ENCODE measurements at regions of chr5 and their contacts with region 1.

Region 1: GRCh38 chr5:97078958-97079743 is 63.3 kb downstream of the LIX1 start:
- DNase-seq: no peak
- H3K4me3 ChIP-seq: no peak overlapping the region
- H3K4me3 Mint-ChIP-seq: no peak overlapping the region
- H3K27ac Mint-ChIP-seq: no peak overlapping the region
- H3K4me1 ChIP-seq: peaks cover 29% of the 10 kb centered on the region
- H3K4me1 Mint-ChIP-seq: peaks cover 25% of the 10 kb centered on the region
- H3K27me3 ChIP-seq: no peaks in the 10 kb centered on the region
- H3K27me3 Mint-ChIP-seq: no peaks in the 10 kb centered on the region
- CTCF ChIP-seq: no peak

Region 2: DNA sequence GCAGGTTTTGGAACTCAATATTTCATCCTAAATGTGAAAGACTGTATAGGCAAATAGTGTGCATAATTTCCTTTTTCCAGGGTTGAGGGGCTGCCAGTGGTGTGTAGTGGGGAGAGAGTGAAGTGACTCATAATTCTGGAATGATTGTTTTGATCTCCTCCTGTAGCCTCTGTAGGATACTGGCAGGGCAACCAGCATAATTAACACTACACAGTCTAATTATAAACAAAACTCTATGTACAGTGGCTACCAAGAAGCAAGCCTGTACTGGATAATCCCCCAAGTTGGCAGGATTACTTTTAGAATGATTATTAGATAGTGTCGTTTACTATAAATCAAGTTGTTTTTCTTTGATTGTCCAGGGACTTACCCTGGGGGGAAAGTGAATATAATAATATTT is 111.1 kb before region 1 on chr5:
- CTCF ChIA-PET with region 1: no interaction called
- POLR2A ChIA-PET with region 1: no interaction called
- intact Hi-C with region 1: no loop called
- DNase-seq: no peak
- H3K4me3 ChIP-seq: no peak overlapping the region
- H3K4me3 Mint-ChIP-seq: no peak overlapping the region
- H3K27ac Mint-ChIP-seq: no peak overlapping the region
- H3K4me1 ChIP-seq: peaks cover 9% of the 10 kb centered on the region; the same call in 1 of the 2 replicates
- H3K4me1 Mint-ChIP-seq: peaks cover 12% of the 10 kb centered on the region
- H3K27me3 ChIP-seq: no peaks in the 10 kb centered on the region
- H3K27me3 Mint-ChIP-seq: no peaks in the 10 kb centered on the region
- CTCF ChIP-seq: no peak

Region 3: GRCh38 chr5:97026721-97027120 is 52.4 kb before region 1 on chr5:
- CTCF ChIA-PET with region 1: no interaction called
- POLR2A ChIA-PET with region 1: no interaction called
- intact Hi-C with region 1: no loop called
- DNase-seq: no peak
- H3K4me3 ChIP-seq: no peak overlapping the region
- H3K4me3 Mint-ChIP-seq: no peak overlapping the region
- H3K27ac Mint-ChIP-seq: no peak overlapping the region
- H3K4me1 ChIP-seq: 0 out of 2 replicates have a peak, but pooled peaks cover 5% of the 10 kb centered on the region
- H3K4me1 Mint-ChIP-seq: no peaks in the 10 kb centered on the region
- H3K27me3 ChIP-seq: no peaks in the 10 kb centered on the region
- H3K27me3 Mint-ChIP-seq: no peaks in the 10 kb centered on the region
- CTCF ChIP-seq: no peak

Region 4: GRCh38 chr5:97094579-97095317 is 15.6 kb after region 1 on chr5:
- CTCF ChIA-PET with region 1: no interaction called
- POLR2A ChIA-PET with region 1: no interaction called
- intact Hi-C with region 1: loop called (anchors 2 kb)
- DNase-seq: no peak
- H3K4me3 ChIP-seq: no peak overlapping the region
- H3K4me3 Mint-ChIP-seq: no peak overlapping the region
- H3K27ac Mint-ChIP-seq: no peak overlapping the region
- H3K4me1 ChIP-seq: peaks cover 15% of the 10 kb centered on the region
- H3K4me1 Mint-ChIP-seq: peaks cover 11% of the 10 kb centered on the region
- H3K27me3 ChIP-seq: no peaks in the 10 kb centered on the region
- H3K27me3 Mint-ChIP-seq: no peaks in the 10 kb centered on the region
- CTCF ChIP-seq: no peak

Region 5: DNA sequence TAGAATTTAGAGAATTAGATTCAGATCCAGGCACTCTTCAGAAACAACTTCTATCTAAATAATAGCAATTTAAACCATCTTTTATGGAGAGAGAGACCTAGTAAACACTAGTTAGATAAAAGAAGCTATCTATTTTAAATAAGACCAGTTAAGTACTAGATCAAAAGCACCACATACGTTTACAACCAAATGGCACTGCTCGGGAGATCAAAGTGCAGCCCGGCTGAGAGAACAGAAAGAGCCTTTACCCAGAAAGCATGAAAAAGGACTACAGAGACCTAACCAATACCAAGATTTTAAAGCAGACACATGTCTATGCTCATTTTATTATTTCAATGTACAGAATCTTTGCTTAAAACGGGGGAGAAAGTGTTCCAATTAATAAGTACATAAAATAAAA is 32.5 kb after region 1 on chr5:
- CTCF ChIA-PET with region 1: no interaction called
- POLR2A ChIA-PET with region 1: no interaction called
- intact Hi-C with region 1: loop called (anchors 5 kb)
- DNase-seq: peak; percentile 59 to 69
- H3K4me3 ChIP-seq: no peak overlapping the region
- H3K4me3 Mint-ChIP-seq: peak overlapping the region; percentile 3
- H3K27ac Mint-ChIP-seq: peak overlapping the region; percentile 3
- H3K4me1 ChIP-seq: peaks cover 27% of the 10 kb centered on the region
- H3K4me1 Mint-ChIP-seq: peaks cover 27% of the 10 kb centered on the region
- H3K27me3 ChIP-seq: no peaks in the 10 kb centered on the region
- H3K27me3 Mint-ChIP-seq: no peaks in the 10 kb centered on the region
- CTCF ChIP-seq: no peak

Region 6: GRCh38 chr5:97124335-97124734 is 45.2 kb after region 1 on chr5:
- CTCF ChIA-PET with region 1: no interaction called
- POLR2A ChIA-PET with region 1: no interaction called
- intact Hi-C with region 1: no loop called
- DNase-seq: no peak
- H3K4me3 ChIP-seq: no peak overlapping the region
- H3K4me3 Mint-ChIP-seq: no peak overlapping the region
- H3K27ac Mint-ChIP-seq: no peak overlapping the region
- H3K4me1 ChIP-seq: 0 out of 2 replicates have a peak, but pooled peaks cover 5% of the 10 kb centered on the region
- H3K4me1 Mint-ChIP-seq: no peaks in the 10 kb centered on the region
- H3K27me3 ChIP-seq: no peaks in the 10 kb centered on the region
- H3K27me3 Mint-ChIP-seq: no peaks in the 10 kb centered on the region
- CTCF ChIP-seq: no peak

Region 7: GRCh38 chr5:97192580-97193358 is 113.6 kb after region 1 on chr5:
- CTCF ChIA-PET with region 1: no interaction called
- POLR2A ChIA-PET with region 1: no interaction called
- intact Hi-C with region 1: no loop called
- DNase-seq: no peak
- H3K4me3 ChIP-seq: no peak overlapping the region
- H3K4me3 Mint-ChIP-seq: no peak overlapping the region
- H3K27ac Mint-ChIP-seq: no peak overlapping the region
- H3K4me1 ChIP-seq: peaks cover 5% of the 10 kb centered on the region; the same call in 1 of the 2 replicates
- H3K4me1 Mint-ChIP-seq: no peaks in the 10 kb centered on the region
- H3K27me3 ChIP-seq: no peaks in the 10 kb centered on the region
- H3K27me3 Mint-ChIP-seq: no peaks in the 10 kb centered on the region
- CTCF ChIP-seq: no peak